ENCODE measurements at regions of chr5 and their contacts with region 1.

Region 1: GRCh38 chr5:73081093-73081492 is 39.3 kb upstream of the TMEM171 start:
- DNase-seq: no peak
- H3K4me3 ChIP-seq: no peak overlapping the region
- H3K27ac ChIP-seq: no peak overlapping the region
- H3K4me1 ChIP-seq: no peaks in the 10 kb centered on the region
- H3K27me3 ChIP-seq: no peaks in the 10 kb centered on the region
- CTCF ChIP-seq: no peak
- EP300 ChIP-seq: no peak
- POLR2A ChIP-seq: no peak

Region 2: DNA sequence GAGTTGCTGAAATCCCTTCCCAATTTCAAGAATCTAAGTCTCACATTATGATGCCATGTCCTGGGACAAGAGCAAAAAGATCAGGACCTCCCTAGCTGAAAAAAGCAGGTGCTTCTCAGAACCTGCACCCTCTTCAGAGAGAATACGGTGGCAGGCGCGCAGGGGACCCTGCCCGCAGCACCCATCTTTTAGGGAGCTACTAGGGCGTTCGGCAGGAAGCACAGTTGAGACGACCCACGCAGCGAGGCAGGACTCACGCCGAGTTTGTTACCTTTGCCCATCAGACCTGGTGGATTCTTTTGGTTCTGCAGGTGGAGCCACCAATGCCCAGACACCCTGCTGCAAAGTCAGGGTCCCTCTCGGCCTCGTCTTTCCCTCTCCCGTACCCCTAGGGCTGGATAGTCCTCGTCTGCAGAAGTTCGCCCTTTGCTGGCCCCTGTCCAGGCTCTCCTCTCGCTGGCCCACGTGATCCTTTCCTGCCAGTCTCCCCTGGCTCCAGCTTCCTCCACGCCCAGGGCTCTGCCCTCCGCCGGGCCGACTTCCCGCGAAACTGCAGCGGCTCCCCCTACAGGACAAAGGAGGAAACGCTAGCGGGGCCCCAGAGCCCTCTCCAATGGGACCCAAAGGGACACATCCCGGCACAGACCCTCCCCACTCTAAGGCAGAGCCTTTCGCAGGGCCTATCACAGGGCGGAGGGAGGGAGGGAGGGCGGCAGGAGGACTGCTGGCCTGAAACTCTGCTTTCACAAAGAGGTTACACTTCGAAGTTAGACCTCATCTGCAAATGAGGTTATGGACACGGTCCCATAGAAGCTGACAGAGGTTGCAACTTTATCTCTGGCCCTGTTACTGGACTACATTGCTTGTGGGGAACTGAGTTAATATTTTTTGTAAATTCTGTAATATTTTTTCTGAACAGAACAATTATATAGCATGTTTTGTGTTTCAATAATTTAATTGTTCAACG is 120.7 kb after region 1 on chr5:
- intact Hi-C with region 1: loop called (anchors 5 kb)
- DNase-seq: peak; percentile 80 to 92
- H3K4me3 ChIP-seq: peak overlapping the region in 2 of 4 donors; percentile 4 to 7
- H3K27ac ChIP-seq: no peak overlapping the region
- H3K4me1 ChIP-seq: peaks cover 4 to 8% (median 8%) of the 10 kb centered on the region in 4 donors
- H3K27me3 ChIP-seq: peaks cover 0 to 29% (median 0%) of the 10 kb centered on the region in 3 donors
- CTCF ChIP-seq: peak in 5 of 7 experiments; percentile 71 to 85 (median 73)
- EP300 ChIP-seq: no peak
- POLR2A ChIP-seq: no peak

Measured in stomach (tissue), 19 donors.